ENCODE measurements at regions of chr1 and their contacts with region 1.

Region 1: DNA sequence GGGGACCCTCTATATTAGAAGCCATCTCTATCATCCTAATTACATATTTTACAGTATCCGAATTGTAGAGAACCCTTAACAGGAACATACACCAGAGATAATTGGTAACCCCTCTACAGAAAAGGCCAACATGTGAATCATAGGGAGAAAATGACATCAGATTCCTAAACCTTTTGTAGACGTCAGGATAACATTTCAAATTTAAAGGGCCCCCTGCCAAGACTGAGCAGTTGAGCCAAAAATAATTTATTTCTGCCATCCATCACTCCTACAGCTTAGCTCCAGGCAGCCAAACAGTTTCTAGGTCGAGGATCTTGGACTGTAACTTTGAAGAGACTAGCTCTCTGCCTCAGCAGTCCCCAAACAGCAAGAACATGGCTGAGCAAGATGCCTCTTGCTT is 21.2 kb downstream of the ZNF697 start:
- DNase-seq: no peak
- H3K4me3 ChIP-seq: no peak overlapping the region
- H3K4me1 ChIP-seq: no peaks in the 10 kb centered on the region
- H3K27me3 ChIP-seq: no peaks in the 10 kb centered on the region

Region 2: GRCh38 chr1:119209596-119210295 is 417.1 kb before region 1 on chr1:
- in situ Hi-C with region 1: no loop called
- DNase-seq: no peak
- H3K4me3 ChIP-seq: no peak overlapping the region
- H3K4me1 ChIP-seq: no peaks in the 10 kb centered on the region
- H3K27me3 ChIP-seq: no peaks in the 10 kb centered on the region

Region 3: DNA sequence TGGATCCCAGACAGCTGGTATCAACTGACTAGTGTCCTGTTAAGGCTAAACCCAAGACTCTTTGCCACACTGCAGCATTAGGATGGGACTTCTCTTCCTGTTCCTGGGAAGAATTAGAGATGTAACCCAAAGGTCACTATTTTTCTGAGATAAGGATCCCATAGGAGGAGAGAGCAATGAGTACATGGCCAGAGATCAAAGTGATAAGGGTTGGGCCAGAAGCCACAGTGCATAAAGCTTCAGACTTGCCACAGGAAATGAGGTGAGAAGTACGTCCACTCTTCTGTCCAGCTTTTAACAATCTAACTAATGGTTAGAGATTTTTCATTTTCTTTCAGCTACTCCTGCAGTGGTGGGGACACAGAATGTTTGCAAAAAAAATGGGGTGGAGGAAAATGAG is 119.9 kb before region 1 on chr1 and contains the start of gene HSD3B1:
- in situ Hi-C with region 1: no loop called
- DNase-seq: no peak
- H3K4me3 ChIP-seq: no peak within 1 kb of the TSS
- H3K4me1 ChIP-seq: no peaks in the 10 kb centered on the region
- H3K27me3 ChIP-seq: no peaks in the 10 kb centered on the region

Region 4: DNA sequence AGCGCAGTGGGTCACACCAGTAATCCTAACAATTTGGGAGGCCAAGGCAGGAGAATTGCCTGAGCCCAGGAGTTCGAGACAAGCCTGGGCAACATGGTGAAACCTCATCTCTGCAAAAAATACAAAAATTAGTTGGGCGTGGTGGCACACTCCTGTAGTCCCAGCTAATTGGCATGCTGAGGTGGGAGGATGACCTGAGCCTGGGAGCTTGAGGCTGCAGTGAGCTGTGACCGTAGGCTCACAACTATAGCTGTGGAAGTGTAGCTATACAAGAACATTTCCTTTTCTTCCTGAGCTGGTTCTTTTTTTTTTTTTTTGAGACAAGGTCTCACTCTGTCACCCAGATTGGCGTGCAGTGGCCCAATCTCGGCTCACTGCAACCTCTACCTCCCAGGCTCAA is 40.3 kb after region 1 on chr1:
- in situ Hi-C with region 1: loop called (anchors 5 kb)
- DNase-seq: no peak
- H3K4me3 ChIP-seq: no peak overlapping the region
- H3K4me1 ChIP-seq: peaks cover 8% of the 10 kb centered on the region
- H3K27me3 ChIP-seq: no peaks in the 10 kb centered on the region

Region 5: DNA sequence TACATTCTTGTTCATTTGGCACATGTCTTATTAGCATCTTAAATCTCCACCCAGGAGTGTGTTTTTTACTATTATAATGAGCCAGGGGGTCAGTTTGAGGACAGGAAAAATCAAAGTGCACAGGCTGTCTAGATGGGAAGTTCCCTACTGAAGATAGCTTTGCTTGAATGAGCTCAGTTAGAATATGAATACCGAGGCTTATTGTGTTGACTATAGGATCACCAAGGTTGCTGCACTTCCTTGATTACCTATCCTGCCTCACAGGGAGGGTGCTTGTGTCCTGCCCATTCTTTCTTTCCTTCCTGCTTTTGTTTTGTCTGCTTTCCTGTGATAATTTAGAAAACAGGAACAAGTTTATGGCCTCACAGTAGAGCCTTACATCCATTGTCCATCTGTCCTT is 101.2 kb after region 1 on chr1:
- in situ Hi-C with region 1: loop called (anchors 10 kb)
- DNase-seq: no peak
- H3K4me3 ChIP-seq: no peak overlapping the region
- H3K4me1 ChIP-seq: no peaks in the 10 kb centered on the region
- H3K27me3 ChIP-seq: no peaks in the 10 kb centered on the region

Region 6: DNA sequence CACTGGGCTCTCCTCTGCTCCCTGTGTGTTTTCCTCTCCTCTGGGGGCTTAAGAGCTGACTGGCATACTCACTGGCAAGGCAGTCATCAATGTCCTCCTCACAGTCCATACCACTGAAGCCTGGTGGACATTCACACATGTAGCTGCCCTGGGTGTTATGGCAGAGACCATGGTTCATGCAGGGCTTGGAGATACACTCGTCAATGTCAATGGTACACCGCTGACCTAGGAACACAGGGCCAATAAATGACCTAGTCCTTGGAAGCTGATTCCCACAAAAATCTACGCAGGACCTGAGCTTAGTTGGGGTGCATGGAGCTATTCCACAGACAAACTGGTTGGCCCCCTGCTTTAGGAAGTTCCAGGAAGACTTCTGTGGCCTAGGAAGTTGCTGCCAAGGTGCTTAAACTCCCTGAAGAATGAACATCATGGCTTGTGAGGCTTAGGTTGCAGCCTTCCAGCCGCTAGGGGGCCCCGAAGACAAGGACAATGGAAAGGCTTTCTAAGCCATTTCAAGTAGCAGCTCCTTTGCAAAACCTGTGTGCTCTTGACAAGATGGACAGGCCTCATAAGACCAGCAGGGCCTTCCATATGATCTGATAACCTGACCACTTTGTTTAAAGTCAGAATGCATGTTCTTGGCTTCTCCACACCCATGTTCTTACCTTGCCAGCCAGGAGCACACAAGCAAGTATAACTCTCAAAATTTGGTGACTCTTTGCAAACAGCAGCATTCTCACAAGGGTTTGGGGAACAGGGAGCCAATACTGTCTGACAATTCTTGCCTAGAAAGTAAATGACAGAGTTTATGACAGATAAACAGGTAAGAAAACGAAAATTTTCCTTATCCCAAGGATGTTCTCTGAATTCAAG is 321.7 kb after region 1 on chr1:
- in situ Hi-C with region 1: no loop called
- DNase-seq: peak; percentile 68 to 84
- H3K4me3 ChIP-seq: no peak overlapping the region
- H3K4me1 ChIP-seq: no peaks in the 10 kb centered on the region
- H3K27me3 ChIP-seq: no peaks in the 10 kb centered on the region